ENCODE measurements at regions of chr3 and their contacts with region 1.

Region 1: DNA sequence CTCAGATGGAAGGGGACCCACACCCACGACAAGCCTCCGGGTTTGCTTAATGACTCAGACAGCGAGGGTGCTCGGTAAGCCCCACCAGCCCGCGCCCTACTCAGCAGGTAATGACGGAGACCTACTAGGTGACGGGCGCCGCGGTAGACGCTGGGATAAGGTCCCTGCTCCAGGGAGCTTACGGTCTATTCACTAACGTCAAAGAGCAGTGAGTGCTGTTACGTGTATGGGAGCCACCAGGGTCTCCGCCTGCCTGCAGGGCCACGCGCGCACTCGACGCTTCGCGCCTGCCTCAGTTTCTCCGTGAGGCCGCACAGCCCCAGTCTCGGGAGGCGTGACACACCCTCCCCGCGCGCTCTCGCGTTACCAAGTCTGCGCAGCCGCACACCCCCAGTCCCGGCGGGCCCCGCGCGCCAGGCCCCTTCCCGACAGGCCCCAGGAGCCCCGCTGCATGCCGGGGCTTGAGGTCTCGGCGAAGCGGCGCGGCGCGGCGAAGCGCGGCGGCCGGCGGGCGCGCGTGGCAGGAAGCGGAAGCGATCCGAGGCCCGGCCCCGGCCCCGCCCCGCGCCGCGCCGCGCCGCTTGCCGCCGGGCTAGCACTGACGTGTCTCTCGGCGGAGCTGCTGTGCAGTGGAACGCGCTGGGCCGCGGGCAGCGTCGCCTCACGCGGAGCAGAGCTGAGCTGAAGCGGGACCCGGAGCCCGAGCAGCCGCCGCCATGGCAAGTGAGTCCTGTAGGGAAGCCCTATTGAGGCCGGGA is at the start of gene SEC61A1:
- DNase-seq: peak; percentile 97
- ATAC-seq: peak; percentile 95
- H3K4me3 Mint-ChIP-seq: peak within 1 kb of the TSS; percentile 96
- H3K27ac Mint-ChIP-seq: peak within 1 kb of the TSS; percentile 95
- H3K4me1 Mint-ChIP-seq: peaks cover 41% of the 10 kb centered on the region
- H3K27me3 Mint-ChIP-seq: no peaks in the 10 kb centered on the region
- CTCF ChIP-seq: no peak
- total RNA-seq, gene SEC61A1: 83.2 and 84.0 TPM in 2 replicates

Region 2: GRCh38 chr3:126475413-126476114 is 1576.5 kb before region 1 on chr3 and contains the start of gene ZXDC:
- CTCF ChIA-PET with region 1: no interaction called
- POLR2A ChIA-PET with region 1: no interaction called
- intact Hi-C with region 1: loop called (anchors 10 kb)
- DNase-seq: peak; percentile 92
- ATAC-seq: peak; percentile 86
- H3K4me3 Mint-ChIP-seq: peak within 1 kb of the TSS; percentile 87
- H3K27ac Mint-ChIP-seq: peak within 1 kb of the TSS; percentile 63
- H3K4me1 Mint-ChIP-seq: peaks cover 37% of the 10 kb centered on the region
- H3K27me3 Mint-ChIP-seq: no peaks in the 10 kb centered on the region
- CTCF ChIP-seq: no peak
- total RNA-seq, gene ZXDC: 37.4 and 45.4 TPM in 2 replicates

Region 3: DNA sequence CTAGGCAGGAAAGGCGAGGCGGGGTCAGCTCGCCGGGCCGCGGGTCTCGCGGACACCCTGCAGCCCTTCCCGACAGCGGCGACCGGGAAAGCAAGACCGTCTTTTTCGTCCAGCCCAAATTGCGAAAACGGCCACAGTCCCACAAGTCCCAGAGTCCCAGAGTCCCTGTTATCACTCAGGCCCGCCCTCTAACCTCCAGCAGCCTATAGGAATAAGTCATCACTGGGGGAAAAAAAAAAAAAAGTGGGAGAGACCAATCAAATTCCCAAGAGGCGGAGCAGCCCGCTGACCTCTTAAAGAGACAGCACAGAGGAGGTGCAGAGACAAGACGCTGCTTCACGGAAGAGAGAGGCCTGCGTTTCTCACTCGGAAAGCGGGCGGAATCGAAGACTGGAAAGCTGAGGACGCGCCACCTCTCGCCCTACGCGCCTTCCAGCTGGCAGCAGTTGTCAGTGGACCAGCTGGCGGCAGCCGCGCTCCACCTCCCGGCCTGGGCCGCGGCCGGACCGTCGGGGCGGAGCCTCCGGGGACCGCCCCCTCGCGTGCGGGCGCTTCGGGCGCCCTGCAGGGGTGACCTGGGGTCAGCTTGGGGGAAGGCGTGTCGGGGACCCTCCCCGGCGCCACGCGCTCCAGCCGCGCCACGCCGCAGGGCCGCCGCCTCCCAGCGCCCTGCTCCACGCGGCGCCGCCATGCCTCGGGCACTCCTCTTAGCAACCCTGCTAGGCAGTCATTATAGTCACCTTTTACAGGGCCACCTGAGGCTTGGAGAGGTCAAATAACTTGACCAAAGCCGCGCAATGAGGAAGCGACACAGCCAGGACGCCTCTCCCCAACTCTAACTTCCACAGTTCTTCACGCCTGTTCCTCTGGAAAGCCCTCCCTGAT is 461.2 kb before region 1 on chr3 and contains the start of gene TPRA1:
- CTCF ChIA-PET with region 1: no interaction called
- POLR2A ChIA-PET with region 1: no interaction called
- intact Hi-C with region 1: loop called (anchors 2 kb)
- DNase-seq: peak; percentile 79
- ATAC-seq: peak; percentile 82
- H3K4me3 Mint-ChIP-seq: peak within 1 kb of the TSS; percentile 90
- H3K27ac Mint-ChIP-seq: peak within 1 kb of the TSS; percentile 85
- H3K4me1 Mint-ChIP-seq: peaks cover 28% of the 10 kb centered on the region
- H3K27me3 Mint-ChIP-seq: no peaks in the 10 kb centered on the region
- CTCF ChIP-seq: no peak
- total RNA-seq, gene TPRA1: 17.5 and 18.3 TPM in 2 replicates

Region 4: GRCh38 chr3:127697551-127698240 is 354.3 kb before region 1 on chr3:
- CTCF ChIA-PET with region 1: no interaction called
- POLR2A ChIA-PET with region 1: no interaction called
- intact Hi-C with region 1: loop called (anchors 5 kb)
- DNase-seq: peak; percentile 42
- ATAC-seq: peak; percentile 83
- H3K4me3 Mint-ChIP-seq: peak overlapping the region; percentile 70
- H3K27ac Mint-ChIP-seq: peak overlapping the region; percentile 57
- H3K4me1 Mint-ChIP-seq: peaks cover 24% of the 10 kb centered on the region
- H3K27me3 Mint-ChIP-seq: peaks cover 2% of the 10 kb centered on the region
- CTCF ChIP-seq: no peak

Region 5: DNA sequence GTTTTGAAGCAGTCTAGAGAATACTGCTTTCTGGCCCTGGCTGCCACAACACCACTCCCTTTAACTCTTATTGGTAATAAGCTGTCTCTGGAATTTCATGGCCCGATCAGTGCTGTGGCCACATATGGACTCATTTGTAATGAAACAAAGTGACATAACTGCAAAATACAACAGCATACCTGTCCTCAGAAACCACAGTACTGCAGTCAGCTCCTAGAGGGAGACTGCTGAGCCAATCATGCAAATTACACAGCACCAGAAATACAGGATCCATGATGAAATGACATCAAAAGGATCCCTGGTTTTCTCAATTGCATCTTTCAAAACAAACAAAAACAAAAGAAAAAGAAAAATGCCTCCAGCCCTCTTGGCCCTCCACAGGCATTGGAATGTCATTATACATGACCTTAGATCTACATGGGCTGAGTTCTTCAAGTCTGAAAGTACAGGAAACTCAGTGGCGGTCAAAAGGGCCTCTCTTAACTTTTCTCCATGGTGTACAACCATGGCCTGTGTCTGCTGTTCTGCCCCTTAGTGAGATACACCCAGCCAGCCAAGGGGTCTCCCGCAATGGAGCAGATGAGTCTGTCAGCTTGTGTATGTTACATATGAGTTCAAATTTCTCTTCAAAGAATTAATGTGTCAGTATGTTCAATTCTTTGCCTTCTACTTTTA is 161.9 kb before region 1 on chr3:
- CTCF ChIA-PET with region 1: no interaction called
- POLR2A ChIA-PET with region 1: no interaction called
- intact Hi-C with region 1: no loop called
- DNase-seq: no peak
- ATAC-seq: peak; percentile 42
- H3K4me3 Mint-ChIP-seq: peak overlapping the region; percentile 8
- H3K27ac Mint-ChIP-seq: peak overlapping the region; percentile 78
- H3K4me1 Mint-ChIP-seq: peaks cover 8% of the 10 kb centered on the region
- H3K27me3 Mint-ChIP-seq: no peaks in the 10 kb centered on the region
- CTCF ChIP-seq: no peak

Region 6: GRCh38 chr3:128075516-128076482 is 23.8 kb after region 1 on chr3:
- CTCF ChIA-PET with region 1: interaction called, 4 read pairs
- POLR2A ChIA-PET with region 1: no interaction called
- intact Hi-C with region 1: loop called (anchors 1 kb)
- DNase-seq: peak; percentile 93
- ATAC-seq: peak; percentile 88
- H3K4me3 Mint-ChIP-seq: peak overlapping the region; percentile 79
- H3K27ac Mint-ChIP-seq: no peak overlapping the region
- H3K4me1 Mint-ChIP-seq: peaks cover 13% of the 10 kb centered on the region
- H3K27me3 Mint-ChIP-seq: no peaks in the 10 kb centered on the region
- CTCF ChIP-seq: peak; percentile 48

Region 7: GRCh38 chr3:128170805-128171516 is 118.9 kb after region 1 on chr3:
- CTCF ChIA-PET with region 1: no interaction called
- POLR2A ChIA-PET with region 1: no interaction called
- intact Hi-C with region 1: no loop called
- DNase-seq: no peak
- ATAC-seq: no peak
- H3K4me3 Mint-ChIP-seq: no peak overlapping the region
- H3K27ac Mint-ChIP-seq: no peak overlapping the region
- H3K4me1 Mint-ChIP-seq: peaks cover 27% of the 10 kb centered on the region
- H3K27me3 Mint-ChIP-seq: no peaks in the 10 kb centered on the region
- CTCF ChIP-seq: no peak

Region 8: GRCh38 chr3:128725932-128726690 is 674.1 kb after region 1 on chr3 and contains the start of gene RAB7A:
- CTCF ChIA-PET with region 1: no interaction called
- POLR2A ChIA-PET with region 1: no interaction called
- intact Hi-C with region 1: loop called (anchors 5 kb)
- DNase-seq: peak; percentile 93
- ATAC-seq: peak; percentile 94
- H3K4me3 Mint-ChIP-seq: peak within 1 kb of the TSS; percentile 93
- H3K27ac Mint-ChIP-seq: peak within 1 kb of the TSS; percentile 91
- H3K4me1 Mint-ChIP-seq: peaks cover 61% of the 10 kb centered on the region
- H3K27me3 Mint-ChIP-seq: peaks cover 7% of the 10 kb centered on the region
- CTCF ChIP-seq: no peak
- total RNA-seq, gene RAB7A: 169 and 190 TPM in 2 replicates

Measured in activated B cell treated with CpG ODN at 0.5 μM for 24 hours (primary cell).